Posterior vena cava (tissue), 2 donors: ENCODE measurements at regions of chr9 and their contacts with region 1.

Region 1: GRCh38 chr9:23728736-23729135 is 97.3 kb downstream of the ELAVL2 start:
- DNase-seq: no peak

Region 2: DNA sequence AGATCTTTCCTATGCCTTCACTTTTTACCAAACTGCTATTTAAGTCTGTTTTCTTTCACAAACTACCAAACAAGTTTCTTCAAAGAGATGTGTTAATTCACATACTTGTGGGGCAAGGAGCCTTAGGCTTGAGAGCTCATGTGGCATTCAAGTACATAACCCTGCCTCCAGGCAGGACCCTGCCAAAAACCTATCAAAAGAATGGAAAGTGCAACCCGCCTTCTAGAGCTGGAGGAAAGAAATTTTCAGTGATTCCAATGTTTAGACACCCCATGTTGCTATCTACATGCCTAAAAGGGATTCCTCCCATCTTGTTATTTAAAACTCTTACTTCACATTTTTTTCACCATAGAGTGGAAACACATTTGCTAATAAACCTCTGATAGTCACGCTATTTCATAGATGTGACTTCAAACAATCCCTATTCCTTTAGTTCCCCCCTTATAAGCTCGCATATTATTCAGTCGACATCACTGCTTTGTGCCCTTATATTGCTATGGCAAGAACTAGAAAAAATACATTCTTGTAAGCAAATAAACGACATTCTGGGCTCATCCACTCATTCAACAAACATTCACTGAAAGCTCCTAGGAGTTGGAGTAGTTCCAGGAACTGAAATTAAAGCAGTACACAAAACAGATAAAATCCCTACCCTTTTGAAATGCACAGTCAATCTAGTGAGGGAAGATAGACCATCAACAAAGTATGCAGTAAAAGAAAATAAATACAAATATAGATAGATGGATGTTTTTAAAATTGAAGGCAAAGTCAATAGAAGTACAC is 420.8 kb before region 1 on chr9:
- intact Hi-C with region 1: no loop called
- DNase-seq: no peak

Region 3: GRCh38 chr9:23663536-23663935 is 65.2 kb before region 1 on chr9:
- intact Hi-C with region 1: loop called in 1 of 2 experiments (anchors 5 kb)
- DNase-seq: no peak

Region 4: GRCh38 chr9:23741351-23741750 is 12.6 kb after region 1 on chr9:
- intact Hi-C with region 1: no loop called
- DNase-seq: no peak